Activated naive CD4-positive, alpha-beta T cell treated with anti-CD3 and anti-CD28 coated beads for 36 hours (primary cell): ENCODE measurements at regions of chr7 and their contacts with region 1.

Region 1: GRCh38 chr7:149497456-149498261 is at the start of gene ZNF746:
- DNase-seq: peak; percentile 84
- H3K4me3 Mint-ChIP-seq: peak within 1 kb of the TSS; percentile 93
- H3K27ac Mint-ChIP-seq: peak within 1 kb of the TSS; percentile 90
- H3K4me1 Mint-ChIP-seq: peaks cover 24% of the 10 kb centered on the region
- H3K27me3 Mint-ChIP-seq: peaks cover 2% of the 10 kb centered on the region
- total RNA-seq, gene ZNF746: 11.8 to 12.0 TPM

Region 2: GRCh38 chr7:149147072-149147751 is 350.4 kb before region 1 on chr7 and contains the start of gene ZNF398:
- CTCF ChIA-PET with region 1: interaction called, 4 read pairs
- intact Hi-C with region 1: loop called (anchors 1 kb)
- DNase-seq: peak; percentile 73
- H3K4me3 Mint-ChIP-seq: peak within 1 kb of the TSS; percentile 87
- H3K27ac Mint-ChIP-seq: peak within 1 kb of the TSS; percentile 91
- H3K4me1 Mint-ChIP-seq: peaks cover 33% of the 10 kb centered on the region
- H3K27me3 Mint-ChIP-seq: no peaks in the 10 kb centered on the region
- total RNA-seq, gene ZNF398: 4.3 to 5.0 TPM

Region 3: DNA sequence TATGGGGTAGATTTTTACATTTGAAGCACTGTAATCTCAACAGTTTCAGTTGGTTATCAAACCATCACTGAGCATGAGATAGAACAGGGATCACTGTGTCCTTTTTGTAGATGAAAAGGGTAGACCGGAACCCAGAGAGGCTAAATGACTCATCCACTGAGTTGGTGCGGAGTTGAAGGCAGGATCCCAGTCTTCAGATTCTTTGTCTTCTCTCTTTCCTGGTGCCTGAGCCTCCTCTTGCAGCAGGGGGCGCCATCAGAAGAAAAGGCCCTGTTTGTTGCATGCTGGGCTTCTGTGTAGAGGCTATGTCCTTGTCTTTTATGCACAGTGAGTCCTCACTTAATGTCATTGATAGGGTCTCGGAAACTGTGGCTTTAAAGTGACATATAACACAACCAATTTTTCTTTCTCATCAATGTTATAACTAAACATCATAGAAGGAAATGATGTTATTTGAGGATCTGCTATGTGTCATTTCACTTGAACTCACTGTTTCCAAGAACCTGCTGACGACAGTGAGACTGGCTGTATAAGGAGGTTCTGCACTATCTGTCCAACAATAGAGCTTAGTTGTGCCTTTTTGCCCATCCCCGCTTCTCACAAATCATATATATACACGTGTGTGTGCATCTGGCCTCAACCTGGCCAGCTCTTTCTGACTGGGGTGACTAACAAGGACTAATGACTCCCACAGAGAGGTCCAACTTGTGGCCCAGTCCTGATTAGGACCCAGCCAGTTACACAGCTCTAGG is 288.0 kb before region 1 on chr7:
- CTCF ChIA-PET with region 1: no interaction called
- intact Hi-C with region 1: loop called (anchors 1 kb)
- DNase-seq: peak; percentile 86
- H3K4me3 Mint-ChIP-seq: no peak overlapping the region
- H3K27ac Mint-ChIP-seq: peak overlapping the region; percentile 72
- H3K4me1 Mint-ChIP-seq: peaks cover 5% of the 10 kb centered on the region
- H3K27me3 Mint-ChIP-seq: no peaks in the 10 kb centered on the region

Region 4: DNA sequence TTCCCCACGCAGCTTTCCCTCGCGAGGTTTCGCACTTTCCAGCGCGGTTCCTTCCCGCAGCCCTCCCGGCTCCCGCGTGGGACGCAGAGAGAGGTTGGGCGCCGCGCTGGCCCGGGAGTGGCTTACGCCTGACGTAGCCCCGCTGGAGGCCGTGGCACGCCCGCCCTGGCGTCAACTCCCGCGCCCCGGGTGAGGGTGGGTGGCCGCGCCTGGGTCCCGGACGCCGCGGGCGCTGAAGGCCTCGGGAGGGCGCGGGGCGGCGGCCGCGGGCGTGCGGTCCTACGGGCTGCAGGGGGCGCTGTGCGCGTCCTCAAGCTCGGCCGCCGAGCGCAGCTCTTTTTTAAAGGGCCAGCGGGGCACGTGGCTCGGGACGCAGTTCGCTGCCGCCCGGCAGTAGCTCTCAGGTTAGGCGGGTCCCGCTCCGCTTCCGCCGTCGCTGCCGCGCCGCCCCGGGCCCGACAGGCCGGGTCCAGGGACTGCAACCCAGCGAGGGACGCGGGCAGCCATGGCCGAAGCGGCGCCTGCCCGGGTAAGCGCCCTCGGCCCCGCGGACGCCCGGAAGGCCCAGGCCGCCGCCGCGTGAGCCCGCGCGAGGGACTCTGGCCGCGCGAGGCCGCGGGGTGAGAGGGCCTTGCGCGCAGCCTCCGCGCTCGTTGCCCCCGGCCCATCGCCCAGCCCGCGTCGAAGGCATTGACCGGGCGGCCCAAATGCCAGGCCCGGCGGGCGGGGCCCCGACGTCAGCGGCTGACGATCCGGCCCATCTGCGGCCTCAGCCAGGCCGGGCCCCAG is 235.6 kb before region 1 on chr7 and contains the start of gene ZNF783:
- CTCF ChIA-PET with region 1: interaction called, 6 read pairs
- intact Hi-C with region 1: loop called (anchors 1 kb)
- DNase-seq: peak; percentile 85
- H3K4me3 Mint-ChIP-seq: peak within 1 kb of the TSS; percentile 75
- H3K27ac Mint-ChIP-seq: peak within 1 kb of the TSS; percentile 74
- H3K4me1 Mint-ChIP-seq: peaks cover 29% of the 10 kb centered on the region
- H3K27me3 Mint-ChIP-seq: no peaks in the 10 kb centered on the region
- total RNA-seq, gene ZNF783: 6.8 to 7.1 TPM

Region 5: DNA sequence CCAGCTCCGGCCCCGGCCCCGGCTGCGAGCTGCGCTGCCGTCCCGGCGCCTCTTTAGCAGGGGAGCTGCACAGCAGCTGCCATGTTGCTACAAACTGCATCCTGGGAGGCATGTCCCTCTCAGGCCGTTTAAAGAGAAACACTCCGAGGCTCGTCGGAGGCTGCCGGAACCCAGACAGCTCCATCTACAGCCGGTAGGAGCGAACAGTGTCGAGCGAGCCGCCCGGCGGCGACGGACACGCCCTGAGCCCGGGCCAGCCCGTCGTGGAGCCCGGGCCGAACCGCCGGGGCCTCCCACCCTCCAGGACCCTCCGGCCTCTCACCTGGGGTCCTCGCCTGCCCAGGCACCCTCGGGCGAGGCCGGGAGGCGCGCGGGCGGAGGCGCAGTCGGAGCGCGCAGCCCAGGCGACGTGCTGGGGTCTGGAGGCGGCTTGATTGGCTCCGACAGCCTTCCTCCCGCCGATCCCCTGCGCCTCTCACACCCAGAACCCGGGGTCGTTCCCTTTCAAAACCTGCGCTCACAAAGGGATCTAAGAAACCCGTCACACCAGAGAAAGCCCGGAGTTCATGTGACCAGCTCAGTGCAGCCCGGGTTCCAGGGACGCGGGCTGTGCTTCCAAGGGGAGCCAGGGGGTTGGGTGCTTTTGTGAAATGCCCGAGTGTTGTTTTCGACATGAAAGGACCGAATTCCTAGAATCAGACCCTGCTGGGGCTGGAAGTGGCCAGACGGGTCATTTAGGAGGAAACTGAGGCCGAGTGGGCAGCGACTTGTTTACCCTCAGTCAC is 37.0 kb before region 1 on chr7 and contains the start of gene ZNF777:
- CTCF ChIA-PET with region 1: no interaction called
- intact Hi-C with region 1: loop called (anchors 1 kb)
- DNase-seq: peak; percentile 85
- H3K4me3 Mint-ChIP-seq: peak within 1 kb of the TSS; percentile 80
- H3K27ac Mint-ChIP-seq: peak within 1 kb of the TSS; percentile 59
- H3K4me1 Mint-ChIP-seq: peaks cover 22% of the 10 kb centered on the region
- H3K27me3 Mint-ChIP-seq: peaks cover 3% of the 10 kb centered on the region
- total RNA-seq, gene ZNF777: 8.7 to 9.7 TPM

Region 6: DNA sequence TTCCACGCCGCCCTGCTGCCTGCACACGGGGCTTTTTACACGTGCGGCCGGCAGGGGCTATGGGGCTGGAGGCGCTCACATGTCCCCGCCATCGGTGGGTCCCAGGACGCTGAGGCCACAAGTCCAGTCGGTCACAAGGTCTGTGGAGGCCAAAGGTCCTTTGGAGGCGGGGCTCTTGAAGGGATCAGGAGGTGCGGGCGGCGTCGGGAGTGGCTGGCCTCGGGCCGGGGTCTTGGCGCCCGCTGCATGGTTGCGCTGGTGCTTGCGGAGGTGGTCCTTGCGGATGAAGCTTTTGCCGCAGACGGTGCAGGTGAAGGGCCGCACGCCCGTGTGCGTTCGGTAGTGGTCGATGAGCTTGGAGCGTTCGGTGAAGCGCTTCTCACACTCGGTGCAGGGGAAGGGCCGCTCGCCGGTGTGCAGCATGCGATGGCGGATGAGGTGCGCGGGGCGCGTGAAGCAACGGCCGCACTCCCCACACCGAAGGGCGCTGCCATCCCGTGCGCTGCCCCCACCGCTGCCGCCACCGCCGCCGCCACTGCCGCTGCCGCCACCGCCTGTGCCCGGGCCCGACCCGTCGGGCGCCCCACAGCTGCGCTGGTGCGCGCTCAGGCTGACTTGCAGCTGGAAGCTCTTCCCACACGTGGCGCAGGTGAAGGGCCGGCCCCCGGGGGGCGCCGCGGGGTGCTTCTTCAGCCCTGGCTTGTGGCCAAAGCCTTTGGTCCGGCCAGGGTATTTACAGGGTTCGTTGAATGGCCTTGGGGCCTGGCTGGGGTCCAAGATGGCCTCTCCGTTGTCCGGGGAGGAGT is 23.1 kb before region 1 on chr7:
- CTCF ChIA-PET with region 1: no interaction called
- intact Hi-C with region 1: no loop called
- DNase-seq: no peak
- H3K4me3 Mint-ChIP-seq: no peak overlapping the region
- H3K27ac Mint-ChIP-seq: no peak overlapping the region
- H3K4me1 Mint-ChIP-seq: no peaks in the 10 kb centered on the region
- H3K27me3 Mint-ChIP-seq: no peaks in the 10 kb centered on the region

Region 7: DNA sequence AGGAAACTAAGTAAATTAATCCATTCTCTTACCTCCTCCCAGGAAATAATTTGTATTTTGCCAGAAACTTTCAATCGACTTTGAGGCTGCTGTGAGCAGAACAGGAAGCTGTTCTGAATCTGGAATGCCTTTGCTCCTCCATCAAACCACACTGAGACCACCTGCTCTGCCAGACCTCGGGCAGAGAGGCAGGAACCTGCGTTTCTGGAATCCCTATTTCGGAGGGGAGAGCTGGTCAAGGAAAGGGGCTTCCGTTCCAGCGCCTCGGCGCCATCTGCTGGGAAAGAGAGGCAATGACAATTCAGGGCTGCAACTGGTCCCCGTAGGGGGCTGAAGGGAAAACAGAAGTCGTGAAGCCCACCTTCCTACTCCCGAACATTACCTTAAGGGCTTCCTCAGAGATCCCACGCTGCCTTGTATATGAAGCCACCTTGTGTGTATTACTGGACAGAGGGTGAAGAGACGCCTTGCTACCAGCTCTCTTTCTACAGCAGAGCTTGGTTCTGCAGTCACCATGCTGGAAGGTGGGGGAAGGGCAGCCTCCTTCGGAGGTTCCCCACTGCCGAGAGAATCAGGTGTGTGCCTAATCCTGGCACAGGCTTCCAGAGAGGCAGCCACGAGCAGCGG is 244.5 kb after region 1 on chr7:
- CTCF ChIA-PET with region 1: interaction called, 3 read pairs
- intact Hi-C with region 1: loop called (anchors 5 kb)
- DNase-seq: peak; percentile 71
- H3K4me3 Mint-ChIP-seq: peak overlapping the region; percentile 61
- H3K27ac Mint-ChIP-seq: no peak overlapping the region
- H3K4me1 Mint-ChIP-seq: peaks cover 11% of the 10 kb centered on the region
- H3K27me3 Mint-ChIP-seq: peaks cover 34% of the 10 kb centered on the region